Sigmoid colon (tissue), 7 donors: ENCODE measurements at regions of chr5 and their contacts with region 1.

Region 1: GRCh38 chr5:6377905-6378765 is at the start of gene MED10:
- DNase-seq: peak; percentile 98
- H3K4me3 ChIP-seq: peak within 1 kb of the TSS; percentile 92 to 96 (median 94)
- H3K27ac ChIP-seq: peak within 1 kb of the TSS; percentile 89 to 94 (median 92)
- H3K4me1 ChIP-seq: peaks cover 0 to 21% (median 19%) of the 10 kb centered on the region in 4 donors
- H3K27me3 ChIP-seq: no peaks in the 10 kb centered on the region
- CTCF ChIP-seq: no peak
- EP300 ChIP-seq: no peak
- POLR2A ChIP-seq: peak; percentile 68 to 69
- total RNA-seq, gene MED10: 29.2 to 67.6 (median 37.3) TPM

Region 2: DNA sequence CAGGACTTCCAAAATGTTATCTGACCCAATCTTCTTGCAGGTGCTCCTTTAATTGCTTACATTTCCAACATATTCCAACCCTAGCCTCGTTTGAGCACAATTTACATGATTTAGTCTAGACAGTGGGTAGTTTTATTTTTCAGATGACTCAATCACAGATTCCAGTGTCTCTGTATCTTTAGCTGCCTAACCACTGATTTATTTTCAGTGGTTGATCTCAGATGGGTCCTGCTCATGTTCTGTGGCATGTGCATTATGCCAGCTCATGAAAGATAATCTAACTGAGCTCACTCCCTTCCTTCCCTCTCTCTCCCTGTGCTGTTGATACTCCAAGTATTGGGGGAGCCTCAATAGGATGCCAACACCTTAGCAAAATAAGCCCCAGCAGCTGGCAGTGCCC is 1061.8 kb before region 1 on chr5:
- intact Hi-C with region 1: no loop called
- DNase-seq: no peak
- H3K4me3 ChIP-seq: no peak overlapping the region
- H3K27ac ChIP-seq: no peak overlapping the region
- H3K4me1 ChIP-seq: no peaks in the 10 kb centered on the region
- H3K27me3 ChIP-seq: no peaks in the 10 kb centered on the region
- CTCF ChIP-seq: no peak
- EP300 ChIP-seq: no peak
- POLR2A ChIP-seq: no peak

Region 3: GRCh38 chr5:5421961-5422818 is 955.9 kb before region 1 on chr5 and contains the start of gene ICE1:
- intact Hi-C with region 1: loop called (anchors 10 kb)
- DNase-seq: peak; percentile 99
- H3K4me3 ChIP-seq: peak within 1 kb of the TSS; percentile 92 to 98 (median 96)
- H3K27ac ChIP-seq: peak within 1 kb of the TSS; percentile 90 to 97 (median 94)
- H3K4me1 ChIP-seq: peaks cover 0 to 50% (median 37%) of the 10 kb centered on the region in 4 donors
- H3K27me3 ChIP-seq: no peaks in the 10 kb centered on the region
- CTCF ChIP-seq: no peak
- EP300 ChIP-seq: peak in 2 of 4 donors; percentile 68 to 71
- POLR2A ChIP-seq: peak; percentile 50 to 70
- total RNA-seq, gene ICE1: 28.1 to 32.6 (median 30.8) TPM

Region 4: DNA sequence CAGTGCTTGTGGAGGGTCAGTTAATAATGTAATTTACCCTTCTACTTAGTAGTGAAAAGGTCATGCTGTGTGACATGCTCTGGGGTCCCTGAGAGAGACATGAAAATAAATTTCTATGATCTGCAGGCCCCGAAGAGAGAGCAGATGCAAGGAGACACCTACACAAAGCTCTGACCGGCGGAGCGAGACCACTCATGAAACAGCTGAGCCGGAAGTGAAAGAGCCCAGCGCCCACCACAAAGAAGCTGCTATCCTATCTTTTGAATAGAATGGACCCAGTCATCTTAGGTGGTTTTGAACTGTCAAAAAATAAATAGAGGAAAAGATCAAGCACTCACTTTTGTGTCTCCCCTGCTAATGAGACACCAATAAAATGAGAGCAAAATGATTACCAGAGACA is 189.8 kb before region 1 on chr5:
- intact Hi-C with region 1: no loop called
- DNase-seq: no peak
- H3K4me3 ChIP-seq: no peak overlapping the region
- H3K27ac ChIP-seq: no peak overlapping the region
- H3K4me1 ChIP-seq: no peaks in the 10 kb centered on the region
- H3K27me3 ChIP-seq: no peaks in the 10 kb centered on the region
- CTCF ChIP-seq: no peak
- EP300 ChIP-seq: no peak
- POLR2A ChIP-seq: no peak

Region 5: GRCh38 chr5:6419340-6419852 is 41.3 kb after region 1 on chr5:
- intact Hi-C with region 1: loop called (anchors 5 kb)
- DNase-seq: no peak
- H3K4me3 ChIP-seq: no peak overlapping the region
- H3K27ac ChIP-seq: peak overlapping the region in 3 of 4 donors; percentile 54 to 69 (median 64)
- H3K4me1 ChIP-seq: peaks cover 0 to 22% (median 20%) of the 10 kb centered on the region in 4 donors
- H3K27me3 ChIP-seq: no peaks in the 10 kb centered on the region
- CTCF ChIP-seq: no peak
- EP300 ChIP-seq: peak in 1 of 4 donors; percentile 8
- POLR2A ChIP-seq: no peak

Region 6: DNA sequence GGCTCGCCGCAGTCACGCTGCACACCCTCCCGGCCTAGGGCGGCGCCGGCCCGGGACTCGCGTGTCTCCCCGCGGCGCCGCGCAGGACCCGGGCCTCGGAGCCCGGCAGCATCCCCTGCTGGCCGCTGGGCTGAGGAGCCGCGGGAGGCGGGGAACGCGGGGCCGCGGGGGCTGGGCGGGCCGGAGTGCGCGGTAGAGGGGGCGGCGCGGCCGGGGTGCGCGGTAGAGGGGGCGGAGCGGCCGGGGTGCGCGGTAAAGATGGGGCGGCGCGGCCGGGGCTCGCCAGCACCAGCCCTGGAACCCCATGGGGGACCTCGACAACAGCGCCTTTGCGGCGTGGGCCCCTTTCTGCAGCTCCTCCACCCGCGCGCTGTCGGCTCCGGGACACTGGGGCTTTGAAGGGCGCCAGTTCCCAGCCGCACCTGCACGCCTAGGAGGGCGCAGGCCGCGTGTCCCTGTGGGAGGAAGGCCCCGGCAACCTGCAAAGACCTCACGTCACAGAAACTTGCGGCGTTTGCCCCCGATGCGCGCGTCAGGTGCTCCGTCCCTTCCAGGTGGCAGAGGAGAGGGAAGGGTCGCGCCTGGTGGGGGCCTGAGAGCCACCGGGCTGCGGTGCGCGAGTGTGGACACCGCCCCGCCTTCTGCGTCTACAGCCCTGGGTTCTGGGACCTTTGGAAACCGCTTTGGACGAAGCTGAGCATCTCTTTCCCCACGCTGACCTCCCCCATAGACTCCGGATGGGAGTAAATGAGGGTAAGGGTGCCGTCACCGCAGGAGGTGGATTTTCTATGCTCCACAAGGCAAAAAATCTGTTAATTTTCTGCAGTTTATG is 205.1 kb after region 1 on chr5:
- intact Hi-C with region 1: loop called (anchors 2 kb)
- DNase-seq: no peak
- H3K4me3 ChIP-seq: peak overlapping the region; percentile 28 to 56 (median 47)
- H3K27ac ChIP-seq: peak overlapping the region in 2 of 4 donors; percentile 23 to 36
- H3K4me1 ChIP-seq: peaks cover 0 to 12% (median 10%) of the 10 kb centered on the region in 4 donors
- H3K27me3 ChIP-seq: peaks cover 0 to 4% (median 0%) of the 10 kb centered on the region in 3 donors
- CTCF ChIP-seq: peak in 2 of 4 experiments; percentile 19 to 54
- EP300 ChIP-seq: no peak
- POLR2A ChIP-seq: no peak

Region 7: DNA sequence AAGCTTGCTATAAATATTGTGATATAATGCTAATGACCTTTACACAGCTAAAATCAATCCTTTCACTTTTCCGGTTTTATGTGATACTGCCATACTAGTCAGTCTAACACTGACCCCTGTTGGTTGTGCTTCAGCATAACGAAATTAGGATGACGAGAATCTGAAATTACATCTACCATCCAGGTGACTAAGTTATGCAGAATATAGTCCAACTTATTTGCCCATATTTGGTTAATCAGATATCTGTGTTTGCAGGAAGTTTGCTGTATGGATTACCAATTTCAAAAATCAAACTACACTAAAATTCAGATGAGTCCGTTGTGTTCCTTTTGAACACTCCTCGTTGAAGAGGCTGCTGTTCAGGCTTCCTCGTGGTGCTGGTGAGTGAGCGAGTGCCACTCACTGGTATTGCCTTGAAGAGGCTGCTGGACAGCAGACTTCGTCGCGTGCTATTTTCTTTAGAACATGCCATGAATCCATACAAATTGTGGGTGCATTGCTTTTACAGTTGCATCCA is 367.6 kb after region 1 on chr5:
- intact Hi-C with region 1: loop called (anchors 10 kb)
- DNase-seq: peak; percentile 18
- H3K4me3 ChIP-seq: no peak overlapping the region
- H3K27ac ChIP-seq: peak overlapping the region in 2 of 4 donors; percentile 24 to 61
- H3K4me1 ChIP-seq: peaks cover 0 to 6% (median 4%) of the 10 kb centered on the region in 4 donors
- H3K27me3 ChIP-seq: no peaks in the 10 kb centered on the region
- CTCF ChIP-seq: peak; percentile 53 to 79 (median 76)
- EP300 ChIP-seq: no peak
- POLR2A ChIP-seq: no peak